ENCODE measurements at regions of chr6 and their contacts with region 1.

Region 1: GRCh38 chr6:34248727-34249551 is at the start of gene SMIM29:
- DNase-seq: peak; percentile 83 to 97
- H3K4me3 ChIP-seq: peak within 1 kb of the TSS; percentile 88
- H3K27ac ChIP-seq: peak within 1 kb of the TSS; percentile 83
- H3K4me1 ChIP-seq: peaks cover 43% of the 10 kb centered on the region
- H3K27me3 ChIP-seq: no peaks in the 10 kb centered on the region
- CTCF ChIP-seq: peak; percentile 87
- total RNA-seq, gene SMIM29: 32.8 and 35.2 TPM in 2 replicates

Region 2: DNA sequence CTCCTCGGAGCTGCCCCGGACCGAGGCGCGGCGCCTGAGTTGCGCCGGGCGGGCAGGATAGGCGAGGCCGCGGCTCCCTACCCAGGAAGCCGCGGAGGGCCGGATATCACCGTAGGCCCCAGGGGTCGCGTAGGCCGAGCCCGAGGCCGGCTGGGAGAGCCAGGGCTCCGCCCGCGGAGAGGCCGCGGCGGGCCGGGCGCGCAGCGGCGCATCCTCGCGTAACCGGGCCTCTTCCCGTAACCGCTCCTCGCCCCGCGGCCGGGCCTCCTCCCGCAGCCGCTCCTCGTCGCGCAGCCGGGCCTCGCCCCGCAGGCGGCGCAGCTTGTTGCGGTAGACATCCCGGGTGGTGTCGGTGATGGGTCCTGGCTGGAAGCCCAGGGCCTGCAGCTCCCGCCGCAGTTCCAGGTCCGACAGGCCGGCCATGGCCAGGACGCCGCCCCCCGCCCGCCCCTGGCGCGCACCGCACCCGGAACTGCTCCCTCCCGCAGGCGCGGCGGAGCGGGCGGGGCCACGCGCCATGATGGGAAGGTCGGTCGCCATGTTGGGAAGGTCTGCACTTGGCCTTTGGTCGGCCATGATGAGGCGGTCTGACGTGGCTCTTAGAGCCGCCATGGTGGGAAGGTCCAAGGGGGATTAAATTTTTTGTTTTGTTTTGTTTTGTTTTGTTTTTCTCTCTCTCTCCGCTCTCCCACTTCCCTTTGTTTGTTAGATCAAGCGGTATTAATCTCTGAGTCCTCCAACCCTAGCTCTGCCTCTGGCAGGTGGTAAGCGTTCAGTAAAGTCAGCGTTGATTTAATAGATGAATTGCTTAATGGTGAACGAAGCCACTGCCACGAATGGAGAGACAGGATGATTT is 460.0 kb before region 1 on chr6 and contains the start of gene LEMD2:
- CTCF ChIA-PET with region 1: no interaction called
- POLR2A ChIA-PET with region 1: no interaction called
- intact Hi-C with region 1: loop called (anchors 10 kb)
- DNase-seq: peak; percentile 66 to 93
- H3K4me3 ChIP-seq: peak within 1 kb of the TSS; percentile 96
- H3K27ac ChIP-seq: peak within 1 kb of the TSS; percentile 57
- H3K4me1 ChIP-seq: peaks cover 18% of the 10 kb centered on the region
- H3K27me3 ChIP-seq: no peaks in the 10 kb centered on the region
- CTCF ChIP-seq: no peak
- total RNA-seq, gene LEMD2: 65.9 and 66.5 TPM in 2 replicates

Region 3: DNA sequence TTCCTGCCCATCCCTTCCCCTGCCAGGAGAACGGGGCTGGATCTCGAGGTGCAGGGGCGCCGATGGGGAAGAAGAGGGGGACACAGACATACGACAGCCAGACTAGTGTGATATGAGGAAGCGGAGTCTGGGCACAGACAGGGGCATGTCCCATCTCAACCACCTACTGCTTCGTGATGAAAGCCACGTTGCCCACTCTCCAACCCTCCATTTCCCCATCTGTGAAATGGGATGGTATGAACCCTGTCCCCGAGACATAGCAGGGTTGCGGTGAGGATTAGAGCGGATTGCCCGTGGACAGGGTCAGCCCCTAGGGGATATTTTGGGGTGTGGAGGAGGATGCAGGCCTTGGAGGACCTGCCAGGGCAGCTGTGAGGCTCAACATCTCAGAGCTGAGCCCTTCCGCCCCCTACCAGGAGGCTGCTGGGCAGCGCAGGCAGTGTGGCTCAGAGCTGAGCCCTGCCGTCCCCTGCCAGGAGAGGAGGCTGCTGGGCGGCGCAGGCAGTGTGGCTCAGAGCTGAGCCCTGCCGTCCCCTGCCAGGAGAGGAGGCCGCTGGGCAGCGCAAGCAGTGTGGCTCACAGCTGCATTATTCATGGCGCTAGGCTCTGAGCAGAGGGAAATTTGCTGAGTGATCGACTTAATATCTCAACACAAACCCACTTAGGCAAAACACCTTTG is 174.7 kb before region 1 on chr6:
- CTCF ChIA-PET with region 1: no interaction called
- POLR2A ChIA-PET with region 1: no interaction called
- intact Hi-C with region 1: no loop called
- DNase-seq: no peak
- H3K4me3 ChIP-seq: no peak overlapping the region
- H3K27ac ChIP-seq: no peak overlapping the region
- H3K4me1 ChIP-seq: no peaks in the 10 kb centered on the region
- H3K27me3 ChIP-seq: peaks cover 35% of the 10 kb centered on the region
- CTCF ChIP-seq: no peak

Region 4: GRCh38 chr6:34196126-34196830 is 52.7 kb before region 1 on chr6:
- CTCF ChIA-PET with region 1: interaction called, 6 read pairs
- POLR2A ChIA-PET with region 1: no interaction called
- intact Hi-C with region 1: loop called (anchors 1 kb)
- DNase-seq: peak; percentile 38 to 82
- H3K4me3 ChIP-seq: peak overlapping the region; percentile 55
- H3K27ac ChIP-seq: no peak overlapping the region
- H3K4me1 ChIP-seq: peaks cover 11% of the 10 kb centered on the region
- H3K27me3 ChIP-seq: no peaks in the 10 kb centered on the region
- CTCF ChIP-seq: peak; percentile 94

Region 5: DNA sequence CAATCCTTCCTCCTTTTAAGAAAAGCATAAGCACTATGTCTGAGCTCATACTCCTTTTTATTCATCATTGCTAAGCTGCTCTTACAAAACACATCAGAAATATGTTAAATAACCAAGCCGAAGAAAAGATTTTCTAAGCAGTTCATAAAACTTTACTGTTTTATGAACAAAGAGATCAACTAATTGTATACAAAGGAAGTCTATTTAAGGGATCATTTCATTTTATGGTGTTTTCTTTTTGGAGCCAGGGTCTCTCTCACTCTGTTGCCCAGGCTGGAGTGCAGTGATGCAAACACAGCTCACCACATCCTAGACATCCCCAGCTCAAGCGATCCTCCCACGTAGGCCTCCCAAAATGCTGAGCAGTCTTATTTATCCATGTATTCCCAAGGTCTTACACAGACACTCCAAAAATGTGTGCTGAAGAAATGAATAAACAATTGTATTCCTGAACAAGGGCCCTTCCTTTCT is 134.3 kb after region 1 on chr6:
- CTCF ChIA-PET with region 1: interaction called, 14 read pairs
- POLR2A ChIA-PET with region 1: no interaction called
- intact Hi-C with region 1: no loop called
- DNase-seq: no peak
- H3K4me3 ChIP-seq: no peak overlapping the region
- H3K27ac ChIP-seq: no peak overlapping the region
- H3K4me1 ChIP-seq: no peaks in the 10 kb centered on the region
- H3K27me3 ChIP-seq: no peaks in the 10 kb centered on the region
- CTCF ChIP-seq: no peak

Region 6: DNA sequence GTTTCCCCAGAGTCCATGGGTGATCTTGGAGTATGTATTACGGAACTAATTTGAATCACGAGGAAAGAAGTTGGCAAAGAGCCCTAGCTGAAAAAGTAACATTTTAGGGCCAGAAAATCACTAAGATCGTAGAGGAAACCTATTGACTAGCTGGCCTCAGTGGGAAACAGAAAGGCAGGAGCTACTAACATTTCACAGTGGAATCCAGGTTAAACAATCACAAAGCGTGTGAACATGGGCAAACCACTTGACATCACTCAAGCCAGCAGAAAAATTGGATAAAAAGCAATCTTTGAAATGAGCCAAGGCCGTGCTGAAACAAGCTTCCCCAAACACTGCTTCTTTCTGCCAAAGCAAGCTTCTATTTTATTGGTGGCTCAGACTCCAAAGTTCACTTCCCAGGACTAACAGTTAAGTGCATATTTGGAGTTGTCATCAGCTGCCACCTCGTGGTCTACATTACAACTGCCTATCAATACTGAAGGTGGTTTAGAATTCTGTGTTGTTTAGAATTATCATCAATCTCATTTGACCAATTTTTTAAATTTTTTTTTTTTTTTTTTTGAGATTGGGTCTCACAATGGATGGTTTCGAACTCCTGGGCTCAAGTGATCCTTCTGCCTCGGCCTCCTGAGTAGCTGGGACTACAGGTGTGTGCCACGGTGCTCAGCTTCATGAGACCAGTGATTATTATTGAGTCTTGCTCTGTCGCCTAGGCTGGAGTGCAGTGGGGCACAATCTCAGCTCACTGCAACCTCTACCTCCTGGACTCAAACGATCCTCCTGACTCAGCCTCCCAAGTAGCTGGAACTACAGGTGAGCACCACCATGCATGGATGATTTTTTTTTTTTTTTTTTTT is 166.3 kb after region 1 on chr6:
- CTCF ChIA-PET with region 1: interaction called, 29 read pairs
- POLR2A ChIA-PET with region 1: no interaction called
- intact Hi-C with region 1: loop called (anchors 2 kb)
- DNase-seq: peak in 1 of 2 experiments; percentile 60
- H3K4me3 ChIP-seq: no peak overlapping the region
- H3K27ac ChIP-seq: no peak overlapping the region
- H3K4me1 ChIP-seq: no peaks in the 10 kb centered on the region
- H3K27me3 ChIP-seq: no peaks in the 10 kb centered on the region
- CTCF ChIP-seq: peak; percentile 54

Region 7: DNA sequence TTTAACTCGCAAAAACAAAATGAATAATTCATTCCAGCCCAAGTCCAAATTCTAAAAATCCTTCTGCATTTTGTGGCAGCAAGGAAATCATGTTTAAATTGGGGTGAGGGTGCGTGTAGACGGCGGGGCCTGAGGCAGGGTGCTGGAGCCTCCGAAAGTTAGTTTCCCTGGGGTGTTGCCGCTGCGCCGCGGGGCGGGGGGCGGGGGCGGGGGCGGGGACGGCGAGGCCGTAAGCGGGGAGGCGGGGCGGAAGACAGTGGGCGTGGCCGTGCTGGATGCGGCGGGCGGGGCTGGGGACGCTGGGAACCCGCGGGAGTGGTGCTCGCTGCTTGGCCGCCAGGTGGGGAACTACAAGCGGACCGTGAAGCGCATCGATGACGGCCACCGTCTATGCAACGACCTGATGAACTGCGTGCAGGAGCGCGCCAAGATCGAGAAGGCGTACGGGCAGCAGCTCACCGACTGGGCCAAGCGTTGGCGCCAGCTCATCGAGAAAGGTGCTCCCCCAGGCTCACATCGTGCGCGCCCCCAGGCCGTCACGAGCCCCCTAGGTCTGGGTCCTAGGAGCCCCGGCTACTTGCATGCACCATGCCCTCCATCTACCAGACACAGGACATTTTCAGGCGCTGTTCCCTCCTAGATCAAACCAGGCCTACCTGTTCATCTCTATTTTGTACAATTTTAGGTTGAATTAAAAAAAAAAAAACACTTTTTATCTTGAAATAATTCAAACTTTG is 278.2 kb after region 1 on chr6:
- CTCF ChIA-PET with region 1: no interaction called
- POLR2A ChIA-PET with region 1: no interaction called
- intact Hi-C with region 1: loop called (anchors 2 kb)
- DNase-seq: peak; percentile 75 to 93
- H3K4me3 ChIP-seq: peak overlapping the region; percentile 36; the same call in 1 of the 2 replicates
- H3K27ac ChIP-seq: no peak overlapping the region
- H3K4me1 ChIP-seq: peaks cover 12% of the 10 kb centered on the region
- H3K27me3 ChIP-seq: no peaks in the 10 kb centered on the region
- CTCF ChIP-seq: peak; percentile 56

Region 8: DNA sequence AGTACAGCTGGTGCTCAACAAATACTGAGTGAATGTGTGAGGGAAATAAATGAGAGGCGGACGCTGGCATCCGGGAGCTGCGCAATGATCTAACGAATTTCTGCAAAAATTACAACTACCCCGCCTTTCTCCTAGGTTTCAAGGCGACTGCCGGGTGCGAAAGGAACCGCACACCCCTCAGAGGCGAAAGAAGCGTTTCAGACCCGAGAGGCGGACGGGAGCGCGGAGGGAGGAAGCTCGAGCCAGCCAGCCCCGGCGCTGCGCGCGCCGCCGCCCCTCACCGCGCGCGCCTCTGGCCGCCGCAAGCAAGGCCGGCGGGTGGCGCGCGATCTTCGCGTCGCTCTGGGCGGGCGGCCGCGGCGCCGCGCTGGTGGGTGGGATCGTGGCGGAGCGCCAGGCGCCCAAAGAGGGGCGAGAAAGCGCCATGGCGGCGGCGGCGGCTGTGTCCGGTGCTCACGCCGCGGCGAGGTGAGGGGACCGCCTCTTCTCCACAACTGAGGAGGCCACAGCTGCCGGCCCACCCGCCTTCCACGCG is 542.8 kb after region 1 on chr6 and contains the start of gene BLTP3A:
- CTCF ChIA-PET with region 1: no interaction called
- POLR2A ChIA-PET with region 1: no interaction called
- intact Hi-C with region 1: loop called (anchors 5 kb)
- DNase-seq: peak in 1 of 2 experiments; percentile 62
- H3K4me3 ChIP-seq: peak within 1 kb of the TSS; percentile 99
- H3K27ac ChIP-seq: peak within 1 kb of the TSS; percentile 90
- H3K4me1 ChIP-seq: peaks cover 46% of the 10 kb centered on the region
- H3K27me3 ChIP-seq: no peaks in the 10 kb centered on the region
- CTCF ChIP-seq: 0 out of 2 replicates have a peak, but pooled peaks have one; percentile 6
- total RNA-seq, gene BLTP3A: 18.2 and 22.3 TPM in 2 replicates